ENCODE measurements at regions of chr15 and their contacts with region 1.

Region 1: DNA sequence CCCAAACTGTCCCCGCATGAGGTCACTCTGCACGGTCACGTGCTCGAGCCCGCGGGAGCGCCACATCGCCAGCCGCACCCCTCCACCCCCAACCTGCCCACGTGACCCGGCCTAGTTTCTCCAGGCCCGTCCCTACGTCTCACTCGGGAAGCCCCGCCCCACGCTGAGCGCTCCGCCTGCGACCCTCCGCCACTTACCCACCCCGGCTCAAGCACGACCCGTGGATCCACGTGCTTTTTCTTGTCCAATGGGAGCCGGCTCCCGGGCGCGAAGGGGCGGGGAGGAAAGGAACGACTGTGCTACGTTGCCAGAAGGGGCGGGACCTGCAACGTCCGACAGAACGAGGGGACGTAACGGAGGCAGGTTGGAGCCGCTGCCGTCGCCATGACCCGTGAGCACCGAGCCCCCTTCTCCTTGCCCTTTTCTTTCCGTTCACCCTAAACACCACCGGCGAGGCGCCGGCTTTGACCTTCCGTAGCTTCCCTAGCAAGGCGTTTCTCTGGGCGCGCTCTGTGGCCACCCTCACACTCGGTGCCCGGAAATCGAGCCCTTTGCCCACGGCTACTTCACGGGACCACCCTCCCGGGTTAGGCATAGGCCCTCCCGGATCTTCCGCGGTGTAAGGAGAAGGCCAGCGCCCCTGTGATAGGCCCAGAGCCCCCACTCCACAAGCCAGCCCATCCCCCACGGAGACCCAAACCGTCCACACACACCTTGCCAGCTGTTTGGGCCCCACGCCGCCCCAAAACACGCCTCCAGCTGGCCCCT is at the start of gene SERF2:
- DNase-seq: peak; percentile 99
- H3K4me3 ChIP-seq: peak within 1 kb of the TSS; percentile 76 to 99
- H3K27ac ChIP-seq: peak within 1 kb of the TSS; percentile 83 to 94
- H3K4me1 ChIP-seq: peaks cover 18 to 20% of the 10 kb centered on the region in 2 experiments; a peak in 3 of 4 replicates
- H3K27me3 ChIP-seq: no peaks in the 10 kb centered on the region
- CTCF ChIP-seq: no peak
- EP300 ChIP-seq: no peak
- RAD21 ChIP-seq: no peak
- polyA plus RNA-seq, gene SERF2: 935 and 1,369 TPM in 2 replicates

Region 2: GRCh38 chr15:43133430-43134156 is 658.6 kb before region 1 on chr15 and contains the start of gene TMEM62:
- CTCF ChIA-PET with region 1: no interaction called
- POLR2A ChIA-PET with region 1: no interaction called
- DNase-seq: peak; percentile 90
- H3K4me3 ChIP-seq: peak within 1 kb of the TSS; percentile 78 to 94
- H3K27ac ChIP-seq: peak within 1 kb of the TSS; percentile 12 to 71; a peak in 2 of 4 replicates
- H3K4me1 ChIP-seq: peaks cover 0 to 3% of the 10 kb centered on the region in 2 experiments; a peak in 2 of 4 replicates
- H3K27me3 ChIP-seq: no peaks in the 10 kb centered on the region
- CTCF ChIP-seq: no peak
- EP300 ChIP-seq: no peak
- RAD21 ChIP-seq: no peak
- polyA plus RNA-seq, gene TMEM62: 3.3 and 4.3 TPM in 2 replicates

Region 3: GRCh38 chr15:43769584-43770228 is 22.5 kb before region 1 on chr15:
- CTCF ChIA-PET with region 1: interaction called, 14 read pairs
- POLR2A ChIA-PET with region 1: interaction called, 4 read pairs
- DNase-seq: peak; percentile 72
- H3K4me3 ChIP-seq: no peak overlapping the region
- H3K27ac ChIP-seq: peak overlapping the region in 1 of 2 experiments; percentile 7; a peak in 1 of 4 replicates
- H3K4me1 ChIP-seq: no peaks in the 10 kb centered on the region
- H3K27me3 ChIP-seq: no peaks in the 10 kb centered on the region
- CTCF ChIP-seq: peak; percentile 91
- EP300 ChIP-seq: no peak
- RAD21 ChIP-seq: peak; percentile 65

Region 4: GRCh38 chr15:43776718-43777583 is 15.2 kb before region 1 on chr15 and contains the start of gene ELL3:
- CTCF ChIA-PET with region 1: interaction called, 13 read pairs
- POLR2A ChIA-PET with region 1: interaction called, 3 read pairs
- DNase-seq: peak; percentile 65
- H3K4me3 ChIP-seq: peak within 1 kb of the TSS; percentile 48 to 57
- H3K27ac ChIP-seq: peak within 1 kb of the TSS in 1 of 2 experiments; percentile 22; a peak in 2 of 4 replicates
- H3K4me1 ChIP-seq: peaks cover 0 to 3% of the 10 kb centered on the region in 2 experiments; a peak in 1 of 4 replicates
- H3K27me3 ChIP-seq: no peaks in the 10 kb centered on the region
- CTCF ChIP-seq: peak; percentile 74
- EP300 ChIP-seq: no peak
- RAD21 ChIP-seq: no peak
- polyA plus RNA-seq, gene ELL3: 0.67 and 0.89 TPM in 2 replicates

Region 5: DNA sequence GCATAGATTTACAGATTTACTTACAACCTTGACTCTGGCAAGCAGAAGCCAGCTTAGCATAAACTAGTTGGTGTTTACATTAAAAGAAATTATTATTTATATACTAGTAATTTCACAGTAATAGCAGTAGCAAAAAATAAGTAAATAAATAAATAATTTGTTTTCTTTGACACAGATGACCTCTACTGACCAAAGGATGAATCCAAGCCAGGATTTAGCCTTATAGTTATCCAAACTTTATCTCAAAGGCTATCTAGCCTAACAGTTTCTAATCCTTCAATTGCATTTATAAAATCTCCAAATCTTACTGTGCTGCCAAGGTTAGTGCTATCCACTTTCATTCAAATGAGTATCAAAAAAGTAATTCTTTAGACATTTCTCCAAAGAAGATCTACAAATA is 338.6 kb after region 1 on chr15:
- CTCF ChIA-PET with region 1: no interaction called
- POLR2A ChIA-PET with region 1: no interaction called
- DNase-seq: no peak
- H3K4me3 ChIP-seq: no peak overlapping the region
- H3K27ac ChIP-seq: no peak overlapping the region
- H3K4me1 ChIP-seq: no peaks in the 10 kb centered on the region
- H3K27me3 ChIP-seq: no peaks in the 10 kb centered on the region
- CTCF ChIP-seq: peak; percentile 56
- EP300 ChIP-seq: no peak
- RAD21 ChIP-seq: peak; percentile 50; the same call in 1 of the 2 replicates

Measured in SK-N-SH (cell line).